Endothelial cell of umbilical vein (primary cell): ENCODE measurements at regions of chr12 and their contacts with region 1.

Region 1: GRCh38 chr12:12032851-12033588 is 37.7 kb upstream of the BCL2L14 start:
- DNase-seq: peak; percentile 91
- H3K4me3 ChIP-seq: peak overlapping the region; percentile 22 to 67 (median 49)
- H3K27ac ChIP-seq: peak overlapping the region; percentile 73
- H3K4me1 ChIP-seq: peaks cover 8% of the 10 kb centered on the region
- H3K27me3 ChIP-seq: peaks cover 0 to under 1% of the 10 kb centered on the region in 2 experiments
- CTCF ChIP-seq: peak; percentile 78 to 82
- POLR2A ChIP-seq: peak; percentile 52

Region 2: DNA sequence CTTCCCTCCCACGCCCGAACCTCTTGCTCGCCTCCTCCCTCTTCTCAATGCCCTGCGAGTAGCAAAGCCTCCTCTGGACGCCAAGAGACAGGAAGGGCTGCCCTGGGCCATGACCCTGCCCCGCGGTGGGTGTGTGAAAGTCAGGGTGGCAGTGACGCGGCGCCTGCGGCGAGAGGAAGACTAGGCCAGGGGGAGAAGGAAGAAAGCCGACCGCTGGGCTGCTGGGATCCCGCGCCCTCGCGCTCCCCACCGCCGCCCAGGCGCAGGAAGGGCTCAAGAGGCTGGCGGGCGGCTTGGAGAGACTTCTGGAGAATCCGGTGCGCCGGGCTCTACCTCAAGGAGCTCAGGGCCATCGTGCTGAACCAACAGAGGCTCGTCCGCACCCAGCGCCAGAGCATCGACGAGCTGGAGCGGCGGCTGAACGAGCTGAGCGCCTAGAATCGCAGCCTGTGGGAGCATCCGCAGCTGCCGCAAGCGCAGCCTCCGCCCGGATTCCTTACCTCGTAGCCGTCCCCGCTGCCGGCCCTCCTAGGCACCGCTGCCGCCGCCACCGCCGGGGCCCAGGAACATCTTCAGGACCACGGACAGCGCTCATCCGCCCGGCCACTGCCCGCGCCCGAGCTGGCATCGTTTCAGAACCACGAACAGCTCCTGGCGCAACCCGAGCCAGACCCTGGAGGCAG is 532.7 kb before region 1 on chr12:
- CTCF ChIA-PET with region 1: interaction called, 8 read pairs
- POLR2A ChIA-PET with region 1: no interaction called
- dilution Hi-C with region 1: no loop called
- intact Hi-C with region 1: loop called (anchors 2 kb)
- DNase-seq: peak; percentile 75
- H3K4me3 ChIP-seq: no peak overlapping the region
- H3K27ac ChIP-seq: no peak overlapping the region
- H3K4me1 ChIP-seq: no peaks in the 10 kb centered on the region
- H3K27me3 ChIP-seq: peaks cover 3 to 4% of the 10 kb centered on the region in 2 experiments
- CTCF ChIP-seq: no peak
- POLR2A ChIP-seq: no peak

Region 3: DNA sequence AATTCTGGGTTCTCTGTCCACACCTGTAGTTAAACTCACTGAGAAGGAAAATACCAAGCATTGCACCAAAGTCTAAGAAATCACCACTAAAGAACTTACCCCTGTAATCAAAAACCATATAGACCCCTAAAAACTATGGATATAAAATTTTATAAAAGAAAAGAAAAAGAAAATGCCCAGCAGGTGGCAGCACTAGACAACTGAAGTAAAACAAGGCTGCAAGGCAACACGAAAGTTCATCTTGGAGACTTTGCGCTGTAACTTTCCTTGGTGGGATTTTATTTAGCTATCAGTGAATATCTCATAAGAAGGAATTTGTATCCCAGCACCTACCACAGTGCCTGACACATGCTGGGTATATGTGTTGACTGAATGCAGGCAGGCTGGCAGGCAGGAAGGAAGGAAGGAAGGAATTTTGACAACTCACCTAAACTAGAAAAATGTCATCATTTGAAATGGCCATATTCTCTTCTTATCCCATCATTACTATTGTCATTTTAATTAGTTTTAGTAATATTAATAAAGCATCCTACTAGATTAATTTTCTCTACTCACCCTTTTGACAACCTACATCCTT is 451.8 kb before region 1 on chr12:
- CTCF ChIA-PET with region 1: interaction called, 429 read pairs
- POLR2A ChIA-PET with region 1: interaction called, 3 read pairs
- dilution Hi-C with region 1: loop called (anchors 25 kb)
- intact Hi-C with region 1: loop called (anchors 1 kb)
- DNase-seq: peak; percentile 65
- H3K4me3 ChIP-seq: no peak overlapping the region
- H3K27ac ChIP-seq: no peak overlapping the region
- H3K4me1 ChIP-seq: peaks cover 8% of the 10 kb centered on the region
- H3K27me3 ChIP-seq: no peaks in the 10 kb centered on the region
- CTCF ChIP-seq: peak in 1 of 2 donors; percentile 16
- POLR2A ChIP-seq: no peak

Region 4: GRCh38 chr12:11765817-11766794 is 266.9 kb before region 1 on chr12:
- CTCF ChIA-PET with region 1: interaction called, 14 read pairs
- POLR2A ChIA-PET with region 1: no interaction called
- dilution Hi-C with region 1: no loop called
- intact Hi-C with region 1: no loop called
- DNase-seq: peak; percentile 78
- H3K4me3 ChIP-seq: no peak overlapping the region
- H3K27ac ChIP-seq: peak overlapping the region; percentile 85
- H3K4me1 ChIP-seq: peaks cover 41% of the 10 kb centered on the region
- H3K27me3 ChIP-seq: no peaks in the 10 kb centered on the region
- CTCF ChIP-seq: no peak
- POLR2A ChIP-seq: peak; percentile 53

Region 5: DNA sequence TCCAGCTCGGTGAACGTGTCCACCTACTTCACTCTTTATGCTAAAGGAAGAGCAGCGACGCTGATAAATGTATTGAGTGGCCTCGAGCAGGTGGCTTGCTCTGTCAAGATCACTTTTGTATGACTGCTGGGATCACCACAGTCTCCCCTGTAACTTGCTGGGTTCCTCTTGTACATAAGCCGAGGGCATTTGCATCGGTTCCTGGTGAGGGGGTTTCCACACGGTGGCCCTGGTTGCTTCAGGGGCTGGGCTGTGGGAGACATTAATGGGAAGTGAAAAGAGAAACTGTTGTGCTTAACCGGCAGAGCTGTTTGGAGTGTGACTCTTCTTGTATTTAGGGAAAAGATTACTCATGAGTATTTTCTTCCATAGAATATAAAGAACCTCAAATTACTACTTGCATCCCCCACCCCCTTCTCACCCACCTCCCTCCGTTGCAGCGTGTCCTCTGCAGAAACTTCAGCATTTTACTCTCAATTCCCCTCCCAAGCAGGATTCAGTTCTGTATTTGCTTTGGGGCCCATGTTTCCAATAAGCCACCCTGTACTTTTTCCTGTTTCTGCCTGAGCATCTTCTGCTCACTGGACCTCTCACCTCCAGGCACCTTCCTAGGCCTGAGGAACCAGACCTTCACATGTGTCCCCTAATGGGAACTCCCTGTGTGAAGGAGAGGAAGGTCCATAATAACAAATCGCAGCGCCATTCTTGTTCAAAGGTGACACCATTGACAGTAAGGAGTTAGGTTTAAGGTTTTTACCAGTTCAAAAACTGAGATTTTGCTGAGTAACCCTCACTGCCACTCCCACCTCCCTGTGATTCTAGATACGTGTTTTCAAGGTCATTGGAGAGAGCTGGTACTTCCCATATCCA is 196.5 kb before region 1 on chr12:
- CTCF ChIA-PET with region 1: interaction called, 7 read pairs
- POLR2A ChIA-PET with region 1: no interaction called
- dilution Hi-C with region 1: no loop called
- intact Hi-C with region 1: loop called (anchors 5 kb)
- DNase-seq: no peak
- H3K4me3 ChIP-seq: no peak overlapping the region
- H3K27ac ChIP-seq: no peak overlapping the region
- H3K4me1 ChIP-seq: peaks cover 49% of the 10 kb centered on the region
- H3K27me3 ChIP-seq: no peaks in the 10 kb centered on the region
- CTCF ChIP-seq: no peak
- POLR2A ChIP-seq: no peak

Region 6: GRCh38 chr12:11849757-11850504 is 183.1 kb before region 1 on chr12:
- CTCF ChIA-PET with region 1: no interaction called
- POLR2A ChIA-PET with region 1: no interaction called
- dilution Hi-C with region 1: no loop called
- intact Hi-C with region 1: no loop called
- DNase-seq: no peak
- H3K4me3 ChIP-seq: no peak overlapping the region
- H3K27ac ChIP-seq: no peak overlapping the region
- H3K4me1 ChIP-seq: no peaks in the 10 kb centered on the region
- H3K27me3 ChIP-seq: no peaks in the 10 kb centered on the region
- CTCF ChIP-seq: no peak
- POLR2A ChIP-seq: no peak

Region 7: DNA sequence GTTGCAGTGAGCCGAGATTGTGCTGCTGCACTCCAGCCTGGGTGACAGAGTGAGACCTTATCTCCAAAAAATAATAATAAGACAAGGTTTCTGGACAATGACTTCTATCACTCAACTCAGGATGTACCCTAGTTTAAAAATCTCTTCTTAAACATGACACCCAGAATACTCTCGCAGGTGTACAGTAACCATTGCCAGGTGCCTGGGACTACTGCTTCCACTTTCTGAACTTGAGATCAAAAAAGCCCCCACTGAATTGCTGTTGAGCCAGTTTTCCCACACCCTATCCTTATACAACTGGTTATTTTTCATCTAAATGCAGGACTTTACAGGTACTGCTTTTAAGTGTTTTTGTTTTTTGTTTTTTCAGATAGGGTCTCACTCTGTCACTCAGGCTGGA is 360.2 kb after region 1 on chr12:
- CTCF ChIA-PET with region 1: no interaction called
- POLR2A ChIA-PET with region 1: no interaction called
- dilution Hi-C with region 1: no loop called
- intact Hi-C with region 1: no loop called
- DNase-seq: no peak
- H3K4me3 ChIP-seq: no peak overlapping the region
- H3K27ac ChIP-seq: no peak overlapping the region
- H3K4me1 ChIP-seq: peaks cover 6% of the 10 kb centered on the region
- H3K27me3 ChIP-seq: no peaks in the 10 kb centered on the region
- CTCF ChIP-seq: no peak
- POLR2A ChIP-seq: no peak

Region 8: GRCh38 chr12:12403264-12404248 is 370.5 kb after region 1 on chr12:
- CTCF ChIA-PET with region 1: no interaction called
- POLR2A ChIA-PET with region 1: no interaction called
- dilution Hi-C with region 1: no loop called
- intact Hi-C with region 1: no loop called
- DNase-seq: peak; percentile 75
- H3K4me3 ChIP-seq: no peak overlapping the region
- H3K27ac ChIP-seq: no peak overlapping the region
- H3K4me1 ChIP-seq: peaks cover 6% of the 10 kb centered on the region
- H3K27me3 ChIP-seq: no peaks in the 10 kb centered on the region
- CTCF ChIP-seq: no peak
- POLR2A ChIP-seq: no peak